GM10248 (cell line): ENCODE measurements at regions of chr15 and their contacts with region 1.

Region 1: GRCh38 chr15:77981281-77982126 is 96.0 kb downstream of the TBC1D2B start:
- DNase-seq: no peak
- CTCF ChIP-seq: no peak

Region 2: GRCh38 chr15:77921664-77922063 is 59.8 kb before region 1 on chr15:
- CTCF ChIA-PET with region 1: no interaction called
- POLR2A ChIA-PET with region 1: no interaction called
- DNase-seq: no peak
- CTCF ChIP-seq: no peak

Region 3: DNA sequence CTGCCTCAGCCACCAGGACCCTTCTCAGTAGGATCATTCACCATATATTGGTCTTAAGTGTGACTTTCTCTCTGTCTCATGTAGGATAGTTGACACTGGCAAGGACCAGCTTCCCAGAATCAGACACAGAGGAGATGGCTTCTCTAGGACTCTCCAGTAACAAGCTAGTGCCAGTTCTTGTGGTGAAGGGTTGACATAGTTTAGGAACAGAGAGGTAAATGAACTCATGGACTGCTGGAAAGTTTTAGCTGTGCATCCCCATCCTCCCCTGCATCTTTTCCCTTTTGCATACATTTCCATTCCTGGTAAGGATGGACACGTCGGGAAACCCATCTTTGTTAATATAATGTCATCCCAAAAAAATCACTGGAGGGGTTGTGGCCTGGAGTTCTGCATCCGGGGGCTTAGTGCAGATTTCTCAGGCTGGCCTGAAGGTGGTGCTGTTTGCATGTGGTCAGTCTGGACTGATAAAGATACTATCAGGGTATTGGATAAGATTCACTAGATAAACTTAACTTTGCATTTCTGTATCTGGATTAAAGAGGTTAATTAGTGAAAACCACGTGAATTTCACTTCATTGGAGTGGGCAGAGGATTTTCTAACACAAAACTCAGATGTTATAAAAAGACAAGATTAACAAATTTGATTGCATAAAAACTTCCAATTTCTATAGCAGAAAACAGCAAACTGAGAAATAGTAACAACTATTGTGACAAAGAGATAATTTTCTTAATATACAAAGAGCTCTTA is 14.8 kb before region 1 on chr15:
- CTCF ChIA-PET with region 1: interaction called, 12 read pairs
- POLR2A ChIA-PET with region 1: no interaction called
- DNase-seq: peak; percentile 67
- CTCF ChIP-seq: peak; percentile 85